Activated CD4-positive, alpha-beta T cell treated with anti-CD3 and anti-CD28 coated beads for 36 hours (primary cell): ENCODE measurements at regions of chr6 and their contacts with region 1.

Region 1: DNA sequence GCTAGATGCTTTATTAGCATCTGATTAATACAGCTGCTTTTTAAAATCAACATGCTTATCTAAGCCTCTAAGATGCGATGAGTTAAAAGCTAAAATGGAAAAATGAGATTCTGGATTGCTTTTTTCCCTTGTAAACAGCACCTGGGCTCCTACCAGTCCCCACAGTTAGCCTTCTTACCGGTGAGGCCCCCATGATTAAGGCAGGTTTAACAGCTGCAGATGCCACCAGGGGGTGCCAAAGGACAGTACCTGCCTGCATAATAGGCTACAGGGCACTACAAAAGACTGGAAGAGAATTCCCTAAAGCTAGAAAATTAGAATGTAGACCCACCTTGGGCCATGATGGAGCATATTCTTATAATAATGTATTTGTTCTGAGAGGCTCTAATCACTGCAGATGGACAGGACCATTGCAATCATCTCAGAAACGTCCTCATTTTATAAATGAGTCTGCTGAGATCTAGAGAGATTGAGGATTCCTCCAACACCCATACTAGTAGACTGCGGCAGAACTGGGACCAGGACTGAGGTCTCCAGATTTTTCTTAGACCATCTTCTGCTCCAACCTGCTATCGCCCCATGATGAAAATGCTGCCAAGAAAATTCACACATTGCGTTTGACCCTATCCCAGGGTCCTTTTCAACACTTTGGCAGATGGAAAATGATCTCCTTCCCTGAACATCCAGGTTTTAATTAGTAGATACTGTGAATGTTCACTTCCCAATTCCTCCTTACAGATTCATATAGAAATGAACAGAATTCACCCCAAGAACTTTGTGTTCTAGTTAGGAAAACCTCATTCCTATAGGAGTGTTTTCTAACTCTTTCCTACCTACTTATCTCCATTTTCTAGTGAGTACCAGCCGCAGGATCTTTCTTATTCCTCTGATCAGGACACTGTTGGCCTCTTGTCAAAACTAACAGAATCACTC is 148.8 kb downstream of the RPS12 start:
- DNase-seq: peak; percentile 81
- ATAC-seq: peak; percentile 83
- H3K4me3 Mint-ChIP-seq: no peak overlapping the region
- H3K27ac Mint-ChIP-seq: no peak overlapping the region
- H3K4me1 Mint-ChIP-seq: peaks cover 2% of the 10 kb centered on the region
- H3K27me3 Mint-ChIP-seq: peaks cover 23% of the 10 kb centered on the region

Region 2: GRCh38 chr6:132147530-132148011 is 815.6 kb before region 1 on chr6:
- CTCF ChIA-PET with region 1: no interaction called
- POLR2A ChIA-PET with region 1: no interaction called
- intact Hi-C with region 1: no loop called
- DNase-seq: no peak
- ATAC-seq: no peak
- H3K4me3 Mint-ChIP-seq: no peak overlapping the region
- H3K27ac Mint-ChIP-seq: no peak overlapping the region
- H3K4me1 Mint-ChIP-seq: no peaks in the 10 kb centered on the region
- H3K27me3 Mint-ChIP-seq: peaks cover 2% of the 10 kb centered on the region

Region 3: DNA sequence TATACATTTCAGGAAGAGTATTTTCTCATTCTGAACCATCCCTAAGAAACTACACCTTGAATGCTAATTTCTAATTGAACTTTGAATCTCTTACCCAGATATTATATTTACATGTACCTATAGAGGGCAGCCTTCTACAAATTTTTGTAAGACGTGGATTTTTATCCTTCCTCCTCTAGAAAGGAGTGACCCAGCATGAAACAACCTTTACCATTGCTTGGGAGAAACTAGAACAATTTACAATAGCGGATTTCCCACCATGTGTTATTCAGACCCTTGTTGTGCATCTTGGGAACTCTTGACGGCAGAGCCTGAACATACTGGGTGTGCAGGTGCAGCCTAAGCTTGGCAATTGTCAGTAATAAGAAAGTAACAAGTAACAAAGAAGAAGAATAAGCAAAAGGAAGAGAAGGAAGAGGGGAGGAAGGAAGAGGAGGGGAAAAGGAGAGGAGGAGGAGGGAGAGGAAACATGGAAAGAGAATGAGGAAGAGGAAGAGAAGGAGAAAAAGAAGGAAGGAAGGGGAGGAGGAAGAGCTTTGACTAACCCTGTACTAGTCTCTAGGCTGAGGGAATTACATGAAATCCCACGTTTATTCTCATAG is 293.4 kb before region 1 on chr6:
- CTCF ChIA-PET with region 1: interaction called, 7 read pairs
- POLR2A ChIA-PET with region 1: no interaction called
- intact Hi-C with region 1: loop called (anchors 5 to 10 kb)
- DNase-seq: no peak
- ATAC-seq: peak; percentile 64
- H3K4me3 Mint-ChIP-seq: no peak overlapping the region
- H3K27ac Mint-ChIP-seq: no peak overlapping the region
- H3K4me1 Mint-ChIP-seq: peaks cover 3% of the 10 kb centered on the region
- H3K27me3 Mint-ChIP-seq: peaks cover 3% of the 10 kb centered on the region

Region 4: DNA sequence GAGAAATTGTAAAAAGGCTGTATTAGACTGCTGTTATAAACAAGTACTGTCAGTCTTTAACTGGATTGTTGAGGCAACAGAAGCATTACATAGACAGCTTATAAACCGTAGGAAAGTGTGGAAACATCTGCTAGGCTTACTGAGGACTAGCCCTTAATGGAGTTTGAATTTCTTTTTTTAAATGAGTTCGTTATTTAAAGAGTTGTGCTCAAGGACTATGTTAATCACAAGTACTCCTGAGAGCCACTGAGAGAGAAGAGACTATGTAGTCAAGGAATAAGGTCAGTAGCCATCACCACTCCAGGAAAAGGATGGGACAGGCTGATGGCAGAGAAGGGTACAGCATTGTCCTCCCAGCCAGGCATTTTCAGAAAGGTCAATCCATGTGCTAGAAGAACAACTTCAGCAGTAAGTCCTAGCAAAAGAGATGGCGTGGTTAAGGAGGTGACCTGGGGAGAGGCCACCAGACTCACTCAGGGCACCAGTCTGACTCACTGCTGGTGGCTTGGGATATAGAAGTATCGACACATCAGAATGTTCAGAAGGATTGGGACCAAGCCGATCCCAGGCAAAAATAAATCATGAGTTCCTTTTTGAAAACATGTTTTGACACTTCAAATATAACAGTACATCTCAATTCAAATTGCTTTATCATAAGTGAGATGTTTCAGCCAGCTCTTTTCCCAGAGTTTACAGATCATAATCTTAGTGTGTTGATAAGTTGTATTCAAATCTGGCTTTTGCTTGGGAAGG is 142.4 kb before region 1 on chr6:
- CTCF ChIA-PET with region 1: interaction called, 4 read pairs
- POLR2A ChIA-PET with region 1: no interaction called
- intact Hi-C with region 1: loop called (anchors 2 to 5 kb)
- DNase-seq: no peak
- ATAC-seq: peak; percentile 10
- H3K4me3 Mint-ChIP-seq: no peak overlapping the region
- H3K27ac Mint-ChIP-seq: peak overlapping the region; percentile 61
- H3K4me1 Mint-ChIP-seq: peaks cover 48% of the 10 kb centered on the region
- H3K27me3 Mint-ChIP-seq: no peaks in the 10 kb centered on the region

Region 5: GRCh38 chr6:132830334-132830751 is 132.9 kb before region 1 on chr6:
- CTCF ChIA-PET with region 1: interaction called, 4 read pairs
- POLR2A ChIA-PET with region 1: no interaction called
- intact Hi-C with region 1: loop called (anchors 1 to 5 kb)
- DNase-seq: peak; percentile 8
- ATAC-seq: no peak
- H3K4me3 Mint-ChIP-seq: no peak overlapping the region
- H3K27ac Mint-ChIP-seq: no peak overlapping the region
- H3K4me1 Mint-ChIP-seq: no peaks in the 10 kb centered on the region
- H3K27me3 Mint-ChIP-seq: peaks cover 2% of the 10 kb centered on the region

Region 6: DNA sequence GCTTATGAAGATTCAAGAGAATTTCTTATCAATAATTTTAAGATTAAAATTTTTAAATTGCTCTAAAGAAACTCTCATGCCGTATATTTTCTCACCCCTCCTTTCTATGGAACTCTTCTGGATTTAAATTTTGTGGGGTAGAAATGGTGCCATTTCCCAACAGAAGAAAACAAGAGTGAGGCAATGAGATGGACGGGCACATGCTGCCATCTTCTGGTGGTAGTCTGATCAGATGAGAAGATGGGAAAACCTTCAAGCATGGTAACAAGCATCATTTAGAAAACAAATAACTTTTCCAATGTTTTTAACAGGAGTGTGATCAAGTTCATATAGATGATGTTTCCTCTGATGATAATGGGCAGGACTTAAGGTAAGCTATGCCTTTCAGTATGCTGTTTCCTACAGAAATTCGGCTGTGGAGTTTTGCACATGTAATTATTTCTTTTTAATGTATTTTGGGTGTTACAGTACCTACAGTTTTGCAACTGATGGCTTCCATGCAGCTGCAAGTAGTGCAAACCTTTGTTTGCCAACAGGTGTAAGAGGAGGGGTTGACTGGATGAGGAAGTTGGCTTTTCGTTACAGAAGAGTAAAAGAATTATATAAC is 549.3 kb after region 1 on chr6:
- CTCF ChIA-PET with region 1: interaction called, 3 read pairs
- POLR2A ChIA-PET with region 1: no interaction called
- intact Hi-C with region 1: loop called (anchors 1 to 5 kb)
- DNase-seq: peak; percentile 58
- ATAC-seq: no peak
- H3K4me3 Mint-ChIP-seq: no peak overlapping the region
- H3K27ac Mint-ChIP-seq: no peak overlapping the region
- H3K4me1 Mint-ChIP-seq: no peaks in the 10 kb centered on the region
- H3K27me3 Mint-ChIP-seq: peaks cover 21% of the 10 kb centered on the region

Region 7: DNA sequence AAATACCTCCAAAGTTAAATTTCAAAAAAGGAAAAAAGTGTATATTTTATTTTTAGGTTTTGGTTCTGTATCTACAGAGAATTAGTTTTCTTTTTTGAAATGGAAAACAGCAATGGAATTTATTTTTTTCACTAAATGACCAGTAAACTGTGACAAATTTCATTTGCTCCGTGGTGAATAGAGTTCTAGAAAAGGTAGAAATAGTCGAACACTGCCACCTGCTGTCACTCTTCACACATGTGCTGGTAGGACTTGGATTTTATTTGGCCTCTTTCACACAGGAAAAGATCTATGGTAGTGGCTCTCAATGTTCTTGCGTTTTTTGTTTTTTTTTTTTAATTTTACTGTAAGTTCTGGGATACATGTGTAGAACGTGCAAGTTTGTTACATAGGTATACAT is 590.5 kb after region 1 on chr6:
- CTCF ChIA-PET with region 1: no interaction called
- POLR2A ChIA-PET with region 1: no interaction called
- intact Hi-C with region 1: loop called (anchors 1 to 2 kb)
- DNase-seq: peak; percentile 57
- ATAC-seq: no peak
- H3K4me3 Mint-ChIP-seq: no peak overlapping the region
- H3K27ac Mint-ChIP-seq: no peak overlapping the region
- H3K4me1 Mint-ChIP-seq: no peaks in the 10 kb centered on the region
- H3K27me3 Mint-ChIP-seq: peaks cover 7% of the 10 kb centered on the region